ENCODE measurements at regions of chr3 and their contacts with region 1.

Region 1: DNA sequence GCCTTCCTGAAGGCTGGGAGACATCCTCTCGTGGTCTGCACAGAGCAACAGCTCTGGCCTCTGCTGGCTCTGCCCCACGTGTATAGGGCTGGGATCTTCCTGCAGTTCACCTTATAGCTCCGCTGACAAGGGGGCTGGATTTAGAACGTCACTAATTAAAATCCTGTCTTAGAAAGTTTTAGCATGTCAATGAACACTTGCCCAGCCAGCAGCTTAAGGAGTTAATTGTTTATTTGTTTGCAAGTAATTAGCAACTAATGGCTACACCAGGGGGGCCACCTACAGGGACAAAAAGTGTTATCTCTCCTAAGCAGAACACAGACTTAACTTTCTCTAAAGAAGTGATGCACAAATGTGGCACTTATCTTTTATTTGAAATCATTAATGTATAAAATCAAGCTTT is at the start of gene HESX1:
- DNase-seq: no peak
- H3K4me3 ChIP-seq: no peak within 1 kb of the TSS
- H3K27ac ChIP-seq: peak within 1 kb of the TSS; percentile 25
- H3K27me3 ChIP-seq: no peaks in the 10 kb centered on the region
- CTCF ChIP-seq: no peak
- polyA plus RNA-seq, gene HESX1: 0.36 and 0.46 TPM in 2 replicates

Region 2: DNA sequence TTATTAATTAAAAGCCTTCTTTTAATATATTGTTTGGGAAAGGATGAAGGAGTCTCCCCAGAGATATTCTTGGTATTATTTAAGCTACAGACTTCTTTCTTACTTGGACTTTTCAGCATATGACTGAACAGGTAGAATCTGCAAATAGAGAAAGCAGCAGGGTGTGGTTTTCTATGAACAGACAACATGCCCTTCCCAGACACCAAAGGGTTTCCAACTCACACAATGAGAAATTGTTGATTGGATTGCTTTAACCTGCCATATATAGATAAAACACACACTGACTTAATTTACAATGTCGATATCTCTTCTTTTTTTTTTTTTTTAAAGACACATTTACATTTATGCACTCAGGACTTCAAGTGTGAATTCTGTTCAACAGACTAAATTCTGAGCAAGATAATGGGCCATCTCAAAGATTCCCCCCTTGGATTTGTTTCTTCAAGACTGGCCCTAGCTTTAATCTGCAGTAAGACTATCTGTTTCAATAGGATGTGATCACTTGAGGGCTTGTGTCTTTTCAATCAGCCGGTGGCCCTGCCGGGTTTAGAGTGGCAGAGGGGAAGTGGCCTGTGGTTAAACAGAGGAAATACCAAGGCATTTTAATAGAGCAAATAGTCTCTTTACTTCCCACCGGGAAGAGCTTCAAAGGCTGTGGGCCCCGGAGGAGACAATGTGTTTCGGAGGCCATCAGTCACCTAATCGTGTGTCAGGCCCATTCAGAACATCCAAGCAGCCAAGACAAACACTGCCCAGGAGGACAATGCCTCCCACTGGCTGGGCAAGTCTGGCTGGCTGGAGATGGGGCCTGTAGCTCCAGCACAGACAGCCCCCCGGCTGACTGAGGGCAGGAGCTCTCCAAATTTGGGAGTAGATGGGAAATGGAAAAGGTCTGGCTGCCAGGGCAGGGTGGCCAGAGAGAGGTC is 40.8 kb before region 1 on chr3:
- CTCF ChIA-PET with region 1: no interaction called
- POLR2A ChIA-PET with region 1: no interaction called
- DNase-seq: no peak
- H3K4me3 ChIP-seq: no peak overlapping the region
- H3K27ac ChIP-seq: no peak overlapping the region
- H3K27me3 ChIP-seq: peaks cover 37% of the 10 kb centered on the region
- CTCF ChIP-seq: no peak

Region 3: DNA sequence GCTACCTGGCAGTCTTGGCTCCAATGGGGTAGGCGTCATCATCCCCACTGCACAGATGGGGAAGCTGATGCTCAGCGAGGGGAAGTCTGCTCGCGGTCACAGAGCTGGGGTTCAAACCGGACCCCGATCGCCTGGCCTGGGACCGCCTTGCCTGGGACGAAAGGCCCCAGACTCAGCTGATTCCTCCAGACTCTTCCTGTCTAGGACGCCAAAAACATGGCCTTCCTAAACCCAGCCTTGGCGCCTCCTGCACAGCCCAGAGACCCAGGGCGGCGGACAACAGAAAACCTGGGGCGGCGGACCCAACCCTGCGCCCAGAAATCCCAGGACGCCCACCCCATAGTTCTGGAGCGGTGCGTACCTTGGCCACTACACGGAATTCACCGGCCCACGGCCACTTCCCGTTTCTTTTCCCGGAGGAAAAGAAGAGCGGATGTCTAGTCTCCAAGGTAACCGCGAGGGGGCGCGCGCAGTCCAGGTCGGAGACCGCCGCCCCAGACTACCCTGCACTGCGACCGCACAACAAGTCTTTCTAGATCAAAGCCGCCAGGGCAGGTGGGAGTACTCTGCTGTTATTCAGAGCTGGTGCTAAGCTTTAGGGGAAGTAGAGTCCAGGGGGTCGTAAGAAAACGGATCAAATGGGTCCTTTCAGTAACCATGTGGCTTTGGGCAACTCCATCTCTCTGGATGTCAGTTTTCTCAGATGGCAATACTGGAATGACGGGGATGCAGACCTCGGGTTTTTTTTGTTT is 29.8 kb before region 1 on chr3:
- CTCF ChIA-PET with region 1: interaction called, 19 read pairs
- POLR2A ChIA-PET with region 1: no interaction called
- DNase-seq: peak; percentile 8
- H3K4me3 ChIP-seq: peak overlapping the region; percentile 57
- H3K27ac ChIP-seq: no peak overlapping the region
- H3K27me3 ChIP-seq: peaks cover 23% of the 10 kb centered on the region
- CTCF ChIP-seq: peak; percentile 79

Region 4: DNA sequence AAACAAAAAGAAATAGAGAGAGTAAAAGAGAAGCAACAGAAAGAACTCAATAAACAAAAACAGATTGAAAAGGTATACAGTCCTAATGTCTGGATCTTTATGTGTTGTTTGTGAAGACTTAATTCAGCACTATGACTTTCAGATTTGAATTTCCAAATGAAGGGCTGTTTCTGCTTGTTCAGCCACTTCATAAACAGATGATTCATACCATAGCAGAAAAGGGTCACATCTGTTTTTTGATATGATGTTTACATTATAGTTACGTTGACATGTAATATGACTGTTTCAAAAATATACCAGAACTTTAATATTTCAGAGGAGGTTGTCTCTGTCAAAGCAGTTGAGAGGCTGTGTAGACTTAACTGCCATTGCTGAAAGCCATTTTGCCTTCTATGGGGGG is 68.5 kb after region 1 on chr3:
- CTCF ChIA-PET with region 1: no interaction called
- POLR2A ChIA-PET with region 1: no interaction called
- DNase-seq: no peak
- H3K4me3 ChIP-seq: no peak overlapping the region
- H3K27ac ChIP-seq: no peak overlapping the region
- H3K27me3 ChIP-seq: no peaks in the 10 kb centered on the region
- CTCF ChIP-seq: no peak

Region 5: DNA sequence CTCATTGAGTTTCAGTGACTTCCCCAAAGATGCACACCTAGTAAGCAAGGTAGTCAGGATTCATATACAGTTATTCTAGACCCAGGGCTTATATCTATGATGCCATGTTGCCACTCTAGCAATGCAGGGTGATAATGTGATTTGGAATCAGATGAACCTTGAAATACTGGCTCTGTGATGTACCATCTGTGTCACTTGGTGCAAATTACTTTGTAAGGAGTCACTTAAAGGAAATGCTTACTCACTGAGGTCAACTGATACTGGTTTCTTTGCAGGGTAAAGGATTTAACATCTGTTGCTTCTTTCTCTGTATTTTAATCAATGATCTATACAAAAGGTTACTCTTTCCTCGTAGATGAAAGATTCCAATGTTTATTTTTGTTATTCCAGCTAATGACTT is 81.8 kb after region 1 on chr3:
- CTCF ChIA-PET with region 1: no interaction called
- POLR2A ChIA-PET with region 1: no interaction called
- DNase-seq: no peak
- H3K4me3 ChIP-seq: no peak overlapping the region
- H3K27ac ChIP-seq: no peak overlapping the region
- H3K27me3 ChIP-seq: no peaks in the 10 kb centered on the region
- CTCF ChIP-seq: no peak

Measured in AG04450 (cell line).